Sigmoid colon (tissue), 7 donors: ENCODE measurements at regions of chr16 and their contacts with region 1.

Region 1: GRCh38 chr16:48353565-48354163 is 31.5 kb downstream of the SIAH1 start:
- DNase-seq: peak; percentile 79
- H3K4me3 ChIP-seq: no peak overlapping the region
- H3K27ac ChIP-seq: no peak overlapping the region
- H3K4me1 ChIP-seq: peaks cover 0 to 7% (median 0%) of the 10 kb centered on the region in 4 donors
- H3K27me3 ChIP-seq: no peaks in the 10 kb centered on the region
- CTCF ChIP-seq: peak; percentile 76 to 89 (median 84)
- EP300 ChIP-seq: no peak
- POLR2A ChIP-seq: no peak

Region 2: GRCh38 chr16:48035145-48035544 is 318.5 kb before region 1 on chr16:
- intact Hi-C with region 1: no loop called
- DNase-seq: no peak
- H3K4me3 ChIP-seq: no peak overlapping the region
- H3K27ac ChIP-seq: no peak overlapping the region
- H3K4me1 ChIP-seq: no peaks in the 10 kb centered on the region
- H3K27me3 ChIP-seq: no peaks in the 10 kb centered on the region
- CTCF ChIP-seq: no peak
- EP300 ChIP-seq: no peak
- POLR2A ChIP-seq: no peak

Region 3: GRCh38 chr16:48542020-48542473 is 188.4 kb after region 1 on chr16:
- intact Hi-C with region 1: loop called (anchors 5 kb)
- DNase-seq: peak; percentile 76
- H3K4me3 ChIP-seq: no peak overlapping the region
- H3K27ac ChIP-seq: peak overlapping the region in 3 of 4 donors; percentile 5 to 37 (median 33)
- H3K4me1 ChIP-seq: peaks cover 0 to 27% (median 22%) of the 10 kb centered on the region in 4 donors
- H3K27me3 ChIP-seq: no peaks in the 10 kb centered on the region
- CTCF ChIP-seq: peak in 2 of 4 experiments; percentile 25 to 33
- EP300 ChIP-seq: no peak
- POLR2A ChIP-seq: no peak